ENCODE measurements at regions of chr3 and their contacts with region 1.

Region 1: DNA sequence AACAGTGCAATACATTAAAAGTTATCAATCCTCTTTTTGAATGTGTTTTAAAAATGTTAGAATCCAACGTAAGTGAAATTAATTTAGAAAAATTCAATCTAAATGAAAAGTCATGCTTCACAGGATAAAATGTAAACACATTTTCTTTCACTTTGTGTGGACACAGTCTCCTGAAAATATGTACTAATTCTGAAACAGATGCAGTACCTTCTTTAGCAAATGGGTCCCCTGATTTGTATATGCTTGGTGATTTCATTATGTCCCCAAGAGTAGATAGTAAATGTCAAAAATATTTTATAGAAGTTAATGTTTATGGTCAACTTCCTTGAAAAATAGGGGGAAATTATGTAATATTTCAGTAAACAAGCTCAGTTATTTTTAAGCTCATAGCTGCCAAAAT is 28.9 kb downstream of the FOXP1 start:
- DNase-seq: no peak
- ATAC-seq: no peak
- H3K4me3 ChIP-seq: no peak overlapping the region
- H3K27ac ChIP-seq: no peak overlapping the region
- H3K4me1 ChIP-seq: peaks cover 11% of the 10 kb centered on the region
- H3K27me3 ChIP-seq: no peaks in the 10 kb centered on the region
- CTCF ChIP-seq: no peak
- POLR2A ChIP-seq: no peak
- RAD21 ChIP-seq: no peak

Region 2: DNA sequence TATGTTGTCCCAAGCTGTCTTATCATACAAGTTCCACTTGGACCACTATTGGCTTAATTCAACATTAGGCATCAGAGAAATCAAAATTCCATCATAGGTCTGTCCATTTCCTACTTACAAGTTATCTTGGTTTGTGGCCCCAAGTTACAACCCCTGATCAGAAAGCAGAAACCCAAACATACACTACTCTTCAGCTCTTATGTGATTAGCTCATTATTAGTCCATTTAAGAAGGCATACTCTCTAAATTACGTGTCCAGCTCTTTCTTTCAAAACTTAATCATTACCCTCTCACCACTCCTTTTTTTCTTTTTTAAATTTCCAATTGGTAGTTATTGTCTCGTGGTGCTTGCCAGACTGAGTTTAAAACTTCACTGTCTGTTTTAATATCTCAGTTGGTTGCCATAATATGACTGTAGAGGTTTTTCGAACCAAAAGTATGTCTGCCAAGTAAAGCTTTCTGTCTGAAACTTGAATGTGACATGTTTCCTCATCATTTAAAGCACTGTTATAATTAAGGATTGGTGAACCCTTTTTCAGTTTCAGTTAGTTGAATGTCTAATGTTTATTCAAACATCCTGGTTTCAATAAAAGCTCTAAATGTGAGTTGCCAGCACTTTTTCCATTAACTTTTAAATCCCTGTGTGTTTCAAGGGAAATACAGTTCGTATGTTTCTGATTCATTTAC is 1404.8 kb before region 1 on chr3:
- CTCF ChIA-PET with region 1: no interaction called
- POLR2A ChIA-PET with region 1: interaction called, 11 read pairs
- dilution Hi-C with region 1: no loop called
- in situ Hi-C with region 1: no loop called
- intact Hi-C with region 1: no loop called
- DNase-seq: no peak
- ATAC-seq: no peak
- H3K4me3 ChIP-seq: no peak overlapping the region
- H3K27ac ChIP-seq: no peak overlapping the region
- H3K4me1 ChIP-seq: no peaks in the 10 kb centered on the region
- H3K27me3 ChIP-seq: no peaks in the 10 kb centered on the region
- CTCF ChIP-seq: no peak
- POLR2A ChIP-seq: no peak
- RAD21 ChIP-seq: no peak

Region 3: DNA sequence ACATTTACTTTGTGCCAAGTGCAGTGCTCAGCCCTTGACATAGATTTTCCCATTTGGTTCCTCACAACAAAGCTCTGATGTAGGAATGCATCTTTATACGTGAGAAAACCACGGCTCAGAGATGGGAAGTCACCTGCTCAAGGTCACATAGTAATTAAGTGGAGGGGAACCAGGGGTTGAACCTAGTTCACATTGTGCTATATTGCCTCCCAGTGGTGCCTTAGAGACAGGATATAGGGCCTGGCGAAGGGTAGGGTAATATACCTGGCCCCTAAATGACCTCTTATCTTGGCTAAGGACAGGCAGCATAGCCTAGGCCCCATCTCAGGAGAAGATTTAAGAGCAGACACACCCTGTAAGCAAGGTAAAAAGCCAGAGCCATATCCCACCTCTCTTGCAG is 42.6 kb before region 1 on chr3:
- CTCF ChIA-PET with region 1: no interaction called
- POLR2A ChIA-PET with region 1: no interaction called
- dilution Hi-C with region 1: no loop called
- in situ Hi-C with region 1: no loop called
- intact Hi-C with region 1: no loop called
- DNase-seq: no peak
- ATAC-seq: no peak
- H3K4me3 ChIP-seq: no peak overlapping the region
- H3K27ac ChIP-seq: no peak overlapping the region
- H3K4me1 ChIP-seq: peaks cover 7% of the 10 kb centered on the region
- H3K27me3 ChIP-seq: no peaks in the 10 kb centered on the region
- CTCF ChIP-seq: no peak; the same call in 1 of the 2 replicates
- POLR2A ChIP-seq: no peak
- RAD21 ChIP-seq: no peak